Naive thymus-derived CD4-positive, alpha-beta T cell (primary cell): ENCODE measurements at regions of chr1 and their contacts with region 1.

Region 1: DNA sequence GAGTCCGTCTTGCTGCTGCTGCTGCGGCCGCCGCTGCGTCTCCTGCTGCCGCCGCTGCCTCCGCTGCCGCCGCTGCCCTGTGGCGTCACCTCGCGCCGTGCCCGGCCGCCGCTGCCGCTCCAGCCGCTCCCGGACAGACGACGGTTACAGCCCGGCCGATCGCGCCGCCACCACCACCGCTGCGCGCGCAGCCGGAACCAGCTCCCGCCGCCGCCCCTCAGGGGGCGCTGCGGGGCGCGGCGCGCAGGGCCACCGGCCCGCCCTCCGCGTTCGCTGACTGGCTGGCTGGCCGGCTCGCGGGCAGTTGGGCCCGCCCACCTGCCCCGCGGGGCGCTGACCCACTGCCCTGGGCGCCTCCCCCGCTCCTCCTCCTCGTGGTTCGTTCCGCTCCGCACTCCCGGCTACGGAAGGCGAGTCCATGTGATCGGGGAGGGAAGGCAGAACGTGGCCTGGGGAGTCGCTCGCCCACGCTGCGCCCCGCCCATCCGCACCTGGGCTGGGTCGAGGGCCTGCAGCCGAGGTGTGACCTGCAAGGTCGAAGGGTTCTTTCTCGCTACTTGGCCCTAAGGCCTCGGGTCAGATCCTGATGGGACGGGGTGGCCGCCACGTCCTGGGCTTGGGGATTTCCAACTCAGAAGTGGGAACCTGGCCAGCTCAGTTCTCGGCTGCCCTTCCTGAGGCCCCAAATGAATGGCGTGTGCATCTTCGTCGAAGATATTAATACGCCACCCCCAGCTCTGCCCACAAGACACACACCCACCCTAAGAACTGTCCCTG is at the start of gene PTP4A2:
- DNase-seq: peak; percentile 65 to 93 (median 81)
- ATAC-seq: peak; percentile 84
- H3K4me3 ChIP-seq: peak within 1 kb of the TSS; percentile 81
- H3K4me3 Mint-ChIP-seq: peak within 1 kb of the TSS; percentile 92 to 100 (median 96)
- H3K27ac ChIP-seq: peak within 1 kb of the TSS; percentile 81
- H3K27ac Mint-ChIP-seq: peak within 1 kb of the TSS; percentile 90 to 99 (median 95)
- H3K4me1 ChIP-seq: peaks cover 66 to 67% of the 10 kb centered on the region in 2 donors
- H3K4me1 Mint-ChIP-seq: peaks cover 54 to 82% (median 73%) of the 10 kb centered on the region in 7 donors
- H3K27me3 ChIP-seq: no peaks in the 10 kb centered on the region
- H3K27me3 Mint-ChIP-seq: no peaks in the 10 kb centered on the region
- total RNA-seq, gene PTP4A2: 196 to 449 (median 271) TPM

Region 2: GRCh38 chr1:31644560-31645273 is 293.6 kb before region 1 on chr1 and contains the start of gene PEF1:
- CTCF ChIA-PET with region 1: no interaction called
- POLR2A ChIA-PET with region 1: interaction called, 6 read pairs
- intact Hi-C with region 1: loop called in 1 of 2 experiments (anchors 10 kb)
- DNase-seq: peak; percentile 97 to 100 (median 99)
- ATAC-seq: peak; percentile 94
- H3K4me3 ChIP-seq: peak within 1 kb of the TSS; percentile 91
- H3K4me3 Mint-ChIP-seq: peak within 1 kb of the TSS; percentile 92 to 100 (median 98)
- H3K27ac ChIP-seq: peak within 1 kb of the TSS; percentile 98
- H3K27ac Mint-ChIP-seq: peak within 1 kb of the TSS; percentile 98 to 100 (median 99)
- H3K4me1 ChIP-seq: peaks cover 27 to 30% of the 10 kb centered on the region in 2 donors
- H3K4me1 Mint-ChIP-seq: peaks cover 18 to 47% (median 40%) of the 10 kb centered on the region in 7 donors
- H3K27me3 ChIP-seq: no peaks in the 10 kb centered on the region
- H3K27me3 Mint-ChIP-seq: no peaks in the 10 kb centered on the region
- total RNA-seq, gene PEF1: 37.7 to 49.8 (median 40.8) TPM

Region 3: GRCh38 chr1:31831397-31832378 is 106.7 kb before region 1 on chr1:
- CTCF ChIA-PET with region 1: interaction called, 4 read pairs
- POLR2A ChIA-PET with region 1: interaction called, 12 read pairs
- intact Hi-C with region 1: loop called in 1 of 2 experiments (anchors 1 kb)
- DNase-seq: no peak
- ATAC-seq: no peak
- H3K4me3 ChIP-seq: no peak overlapping the region
- H3K4me3 Mint-ChIP-seq: no peak overlapping the region
- H3K27ac ChIP-seq: no peak overlapping the region
- H3K27ac Mint-ChIP-seq: peak overlapping the region in 2 of 9 donors; percentile 5 to 21
- H3K4me1 ChIP-seq: peaks cover 15 to 25% of the 10 kb centered on the region in 2 donors
- H3K4me1 Mint-ChIP-seq: peaks cover 17 to 55% (median 39%) of the 10 kb centered on the region in 7 donors
- H3K27me3 ChIP-seq: no peaks in the 10 kb centered on the region
- H3K27me3 Mint-ChIP-seq: no peaks in the 10 kb centered on the region

Region 4: GRCh38 chr1:31910933-31911332 is 27.4 kb before region 1 on chr1:
- CTCF ChIA-PET with region 1: interaction called, 4 read pairs
- POLR2A ChIA-PET with region 1: interaction called, 22 read pairs
- intact Hi-C with region 1: no loop called
- DNase-seq: no peak
- ATAC-seq: peak; percentile 41
- H3K4me3 ChIP-seq: no peak overlapping the region
- H3K4me3 Mint-ChIP-seq: peak overlapping the region in 5 of 10 donors; percentile 1 to 43 (median 20)
- H3K27ac ChIP-seq: no peak overlapping the region
- H3K27ac Mint-ChIP-seq: peak overlapping the region; percentile 19 to 78 (median 61)
- H3K4me1 ChIP-seq: peaks cover 27 to 40% of the 10 kb centered on the region in 2 donors
- H3K4me1 Mint-ChIP-seq: peaks cover 34 to 61% (median 58%) of the 10 kb centered on the region in 7 donors
- H3K27me3 ChIP-seq: no peaks in the 10 kb centered on the region
- H3K27me3 Mint-ChIP-seq: no peaks in the 10 kb centered on the region

Region 5: DNA sequence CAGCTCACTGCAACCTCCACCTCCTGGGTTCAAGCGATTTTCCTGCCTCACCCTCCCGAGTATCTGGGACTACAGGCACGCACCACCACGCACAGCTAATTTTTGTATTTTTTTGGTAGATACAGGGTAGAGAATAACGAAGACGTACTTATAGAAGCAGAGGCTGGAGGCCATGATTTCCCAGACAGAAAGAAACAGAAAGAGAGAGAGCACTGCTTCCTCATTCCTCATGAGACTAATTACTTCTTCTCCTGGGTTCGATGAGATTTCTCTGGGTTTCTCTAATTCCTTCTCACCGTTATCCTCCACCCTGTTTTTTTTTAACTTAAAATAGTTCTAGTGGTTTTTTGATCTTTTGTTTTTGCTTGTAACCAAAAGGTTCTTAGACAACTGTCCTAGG is 23.2 kb after region 1 on chr1:
- CTCF ChIA-PET with region 1: interaction called, 52 read pairs
- POLR2A ChIA-PET with region 1: interaction called, 248 read pairs
- intact Hi-C with region 1: loop called (anchors 1 kb)
- DNase-seq: no peak
- ATAC-seq: no peak
- H3K4me3 ChIP-seq: no peak overlapping the region
- H3K4me3 Mint-ChIP-seq: peak overlapping the region; percentile 5 to 74 (median 56)
- H3K27ac ChIP-seq: no peak overlapping the region
- H3K27ac Mint-ChIP-seq: peak overlapping the region; percentile 44 to 94 (median 77)
- H3K4me1 ChIP-seq: peaks cover 8 to 34% of the 10 kb centered on the region in 2 donors
- H3K4me1 Mint-ChIP-seq: peaks cover 38 to 65% (median 61%) of the 10 kb centered on the region in 7 donors
- H3K27me3 ChIP-seq: no peaks in the 10 kb centered on the region
- H3K27me3 Mint-ChIP-seq: no peaks in the 10 kb centered on the region